ENCODE measurements at regions of chr12 and their contacts with region 1.

Region 1: GRCh38 chr12:91326058-91327027 is 143.7 kb upstream of the DCN start:
- DNase-seq: no peak

Region 2: DNA sequence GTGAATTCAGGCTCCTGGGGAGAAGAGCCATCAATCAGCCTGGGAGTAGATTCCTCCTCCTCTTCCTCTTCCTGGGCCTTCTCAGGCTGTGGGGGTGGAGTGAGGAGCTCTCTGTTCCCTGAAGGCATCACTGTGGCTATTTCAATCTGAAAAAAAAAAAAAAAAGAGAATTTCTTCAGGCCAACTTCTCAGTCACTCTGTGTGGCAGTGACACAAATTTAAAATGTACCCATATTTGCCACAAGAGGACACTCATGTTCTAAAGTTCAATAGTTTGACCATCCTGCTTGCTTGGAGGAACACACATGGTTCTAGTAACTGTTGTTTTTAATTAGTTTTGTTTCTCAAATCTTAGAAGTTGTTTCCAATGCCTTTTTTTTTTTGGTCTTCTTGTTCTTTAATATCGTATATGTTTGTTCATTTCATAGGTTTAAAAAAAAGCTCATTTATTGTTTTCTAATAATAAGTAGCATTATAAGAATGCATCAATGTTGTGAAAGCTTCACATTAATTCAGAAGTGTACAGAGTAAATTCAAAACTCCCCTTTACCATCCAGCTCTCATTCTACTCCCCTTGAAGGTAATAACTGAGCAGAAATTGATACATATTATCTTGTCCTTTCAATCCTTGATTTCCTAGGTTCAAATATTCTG is 348.1 kb before region 1 on chr12:
- intact Hi-C with region 1: loop called (anchors 5 kb)
- DNase-seq: no peak

Region 3: GRCh38 chr12:91109148-91109564 is 217.2 kb before region 1 on chr12:
- intact Hi-C with region 1: loop called (anchors 10 kb)
- DNase-seq: peak; percentile 77

Region 4: DNA sequence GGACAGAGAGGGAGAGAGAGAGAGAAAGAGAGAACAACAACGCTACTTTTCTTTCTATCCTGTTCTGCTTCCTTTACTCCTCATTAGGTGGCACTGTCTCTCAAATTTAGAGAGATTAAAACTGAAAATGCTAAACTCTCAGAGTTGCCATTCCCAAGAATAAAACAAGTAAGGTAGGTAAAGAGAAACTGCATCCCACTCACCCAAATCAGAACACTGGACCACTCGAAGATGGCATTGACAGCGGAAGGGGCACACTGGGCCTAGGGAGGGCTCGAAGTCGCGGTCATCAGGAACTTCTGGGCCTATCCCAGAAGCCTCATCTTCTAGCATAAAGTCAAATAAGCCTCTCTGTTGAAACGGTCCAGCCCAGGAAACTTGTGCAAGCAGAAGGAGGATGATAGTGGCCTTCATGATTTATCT is 148.2 kb before region 1 on chr12:
- intact Hi-C with region 1: loop called (anchors 2 kb)
- DNase-seq: no peak

Region 5: DNA sequence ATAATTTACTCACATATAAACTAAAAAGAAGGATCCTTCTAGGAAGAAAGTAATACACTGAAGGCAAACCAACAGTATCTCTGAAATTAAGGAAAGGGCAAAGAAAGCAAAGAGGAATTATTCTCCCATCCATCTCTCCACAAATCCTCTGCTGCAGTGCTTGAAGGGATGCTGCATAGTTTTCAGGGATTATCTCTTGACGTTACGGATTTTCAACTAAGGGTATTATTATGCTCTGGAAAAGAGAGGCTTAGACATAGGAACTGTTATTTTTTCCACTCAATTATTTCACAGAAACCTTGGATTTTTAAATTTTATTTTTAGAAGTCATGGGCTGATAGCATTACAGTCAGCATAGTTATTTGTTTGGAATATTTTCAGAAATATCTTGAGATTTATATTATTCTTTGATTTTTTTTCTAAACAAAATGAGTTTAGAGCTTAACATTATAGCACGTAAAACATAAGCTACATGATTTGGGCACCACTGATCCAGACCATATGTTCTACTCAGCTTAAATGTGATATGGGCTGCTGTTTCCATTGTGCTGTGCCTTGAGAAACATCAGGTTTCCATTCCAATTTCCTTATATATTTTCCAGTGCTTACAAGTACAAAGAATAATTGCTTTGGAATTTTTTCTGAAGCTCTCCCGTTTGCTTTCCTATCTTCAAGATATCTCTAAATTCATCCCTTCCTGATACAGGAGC is 85.8 kb before region 1 on chr12:
- intact Hi-C with region 1: loop called (anchors 5 kb)
- DNase-seq: no peak

Region 6: DNA sequence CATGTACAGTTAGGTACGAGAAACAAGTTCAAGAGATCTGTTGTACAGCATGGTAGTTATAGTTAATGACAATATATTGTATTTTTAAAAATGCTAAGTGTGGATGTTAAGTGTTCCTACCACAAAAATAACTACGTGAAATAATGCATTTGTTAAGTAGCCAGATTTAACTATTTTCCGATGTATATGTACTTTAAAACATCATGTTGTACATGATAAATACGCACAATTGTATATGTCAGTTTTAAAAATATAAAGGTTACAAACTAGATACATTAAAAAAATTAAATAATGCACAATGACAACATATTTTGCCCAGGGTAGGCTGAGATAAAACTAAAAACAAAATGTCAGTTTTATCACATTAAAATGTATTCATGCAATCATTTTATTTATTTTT is 141.3 kb after region 1 on chr12:
- intact Hi-C with region 1: no loop called
- DNase-seq: no peak

Measured in cardiac septum (tissue), 1 donor.